ENCODE measurements at regions of chr20 and their contacts with region 1.

Region 1: DNA sequence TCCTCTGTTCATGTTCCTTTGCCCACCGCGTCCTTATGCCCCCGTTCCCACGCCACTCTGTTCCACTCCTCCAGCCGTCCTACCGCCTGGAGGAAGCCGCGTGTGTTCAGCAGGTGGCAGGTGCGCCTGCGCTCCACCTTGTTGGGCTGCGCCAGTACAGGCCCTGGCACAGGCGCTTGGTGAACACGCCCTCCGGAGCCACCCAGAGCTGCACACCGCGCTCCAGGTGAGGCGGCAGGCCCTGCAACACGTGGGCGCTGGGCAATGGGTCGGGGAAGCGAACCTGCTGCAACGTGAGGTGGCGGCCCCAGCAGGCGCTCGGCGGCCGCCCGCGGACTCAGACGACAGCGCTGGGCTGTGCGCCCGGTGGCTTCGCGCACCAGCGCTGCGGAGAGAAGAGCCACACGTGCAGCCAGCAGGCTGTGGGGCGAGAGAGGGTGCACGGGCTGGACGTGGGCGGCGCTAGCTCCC is 4.1 kb upstream of the FOXS1 start:
- DNase-seq: peak; percentile 75
- H3K4me3 Mint-ChIP-seq: peak overlapping the region; percentile 31
- H3K27ac Mint-ChIP-seq: no peak overlapping the region
- H3K4me1 Mint-ChIP-seq: peaks cover 9% of the 10 kb centered on the region
- H3K27me3 Mint-ChIP-seq: peaks cover 46% of the 10 kb centered on the region
- CTCF ChIP-seq: no peak

Region 2: GRCh38 chr20:31822421-31823330 is 26.8 kb before region 1 on chr20:
- CTCF ChIA-PET with region 1: interaction called, 27 read pairs
- intact Hi-C with region 1: loop called (anchors 1 kb)
- DNase-seq: peak; percentile 88
- H3K4me3 Mint-ChIP-seq: peak overlapping the region; percentile 35
- H3K27ac Mint-ChIP-seq: no peak overlapping the region
- H3K4me1 Mint-ChIP-seq: no peaks in the 10 kb centered on the region
- H3K27me3 Mint-ChIP-seq: no peaks in the 10 kb centered on the region
- CTCF ChIP-seq: peak; percentile 100

Region 3: DNA sequence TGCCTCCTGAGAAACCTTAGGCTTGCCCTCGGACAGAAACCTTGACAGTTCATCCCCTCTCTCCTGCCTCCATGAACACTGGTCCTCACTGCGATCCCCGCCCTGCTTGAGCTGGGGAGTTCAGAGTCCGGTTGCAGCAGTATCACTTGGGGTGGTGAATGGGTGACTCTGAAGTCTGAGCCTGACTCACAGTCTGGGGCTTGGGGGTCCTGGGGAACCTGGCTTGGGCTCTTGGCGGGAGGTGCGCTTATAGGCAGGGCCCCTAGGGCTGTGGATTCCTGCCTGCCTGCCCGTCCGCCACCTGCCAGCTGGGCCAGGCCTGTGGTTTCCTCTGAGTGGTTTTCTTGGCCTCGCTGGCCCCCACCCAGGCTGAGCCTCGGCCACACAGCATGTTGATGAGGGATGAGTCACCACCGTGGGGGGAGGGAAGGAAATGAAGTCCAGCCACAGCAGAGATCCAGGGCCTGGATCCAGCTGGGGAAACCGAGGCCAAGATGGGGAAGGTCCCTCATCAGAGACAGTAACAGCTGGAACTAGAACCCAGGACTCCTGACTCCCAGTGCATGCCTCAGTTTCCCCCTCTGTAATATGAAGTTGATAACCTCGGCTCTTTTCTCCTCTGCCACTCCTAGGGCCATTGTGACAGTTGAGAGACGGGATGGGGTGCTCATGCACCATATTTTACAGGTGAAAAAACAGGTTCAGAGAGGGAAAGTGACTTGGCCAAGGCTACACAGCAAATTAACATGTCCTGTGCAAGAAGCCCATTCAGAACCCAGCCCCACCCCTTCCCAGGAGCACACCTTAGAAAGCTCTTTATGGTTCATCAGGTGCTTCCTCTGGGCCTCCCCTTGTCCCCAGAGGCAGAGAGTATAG is 13.3 kb before region 1 on chr20:
- CTCF ChIA-PET with region 1: interaction called, 10 read pairs
- intact Hi-C with region 1: no loop called
- DNase-seq: peak; percentile 97
- H3K4me3 Mint-ChIP-seq: peak overlapping the region; percentile 6
- H3K27ac Mint-ChIP-seq: no peak overlapping the region
- H3K4me1 Mint-ChIP-seq: peaks cover 17% of the 10 kb centered on the region
- H3K27me3 Mint-ChIP-seq: no peaks in the 10 kb centered on the region
- CTCF ChIP-seq: no peak

Region 4: DNA sequence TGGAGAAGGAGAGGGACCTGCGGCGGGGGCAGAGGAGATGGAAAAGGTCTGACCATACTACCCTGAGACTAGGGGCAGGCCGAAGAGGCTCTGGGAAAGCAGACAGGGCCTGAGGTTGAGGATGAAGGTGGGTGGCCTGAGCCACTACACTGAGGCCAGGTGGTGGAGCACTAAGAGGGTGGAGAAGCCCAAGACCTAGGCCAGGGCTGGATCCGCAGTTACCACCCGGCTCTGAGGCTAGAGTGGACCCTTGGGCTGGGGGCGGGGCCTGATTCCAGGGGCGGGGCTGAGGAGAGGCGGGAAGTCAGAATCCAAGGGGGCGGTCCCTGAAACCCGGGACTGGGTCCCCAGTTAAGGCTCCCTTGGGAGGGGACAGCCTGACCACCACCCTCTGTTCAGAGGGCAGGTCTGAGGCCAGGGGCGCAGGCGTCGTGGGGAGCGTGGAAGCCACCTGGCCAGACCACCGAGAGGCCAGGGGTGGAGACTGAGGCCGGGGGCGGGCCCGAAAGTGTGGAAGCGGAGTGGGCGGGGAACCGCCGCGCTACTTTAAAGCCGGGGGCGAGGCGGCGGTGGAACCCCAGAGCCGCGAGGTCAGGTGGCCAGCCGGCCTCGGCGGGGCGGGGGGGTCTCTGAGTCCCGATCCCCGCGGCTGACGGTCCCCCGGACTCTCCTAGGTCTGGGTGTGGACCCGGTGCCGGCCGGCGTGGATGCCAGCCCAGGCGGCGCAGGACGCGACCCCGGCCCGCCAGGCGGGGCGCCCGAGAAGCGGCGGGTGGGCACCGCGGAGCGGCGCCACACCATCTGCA is 169.0 kb after region 1 on chr20:
- CTCF ChIA-PET with region 1: interaction called, 12 read pairs
- intact Hi-C with region 1: no loop called
- DNase-seq: peak; percentile 95
- H3K4me3 Mint-ChIP-seq: peak overlapping the region; percentile 88
- H3K27ac Mint-ChIP-seq: peak overlapping the region; percentile 29
- H3K4me1 Mint-ChIP-seq: no peaks in the 10 kb centered on the region
- H3K27me3 Mint-ChIP-seq: peaks cover 95% of the 10 kb centered on the region
- CTCF ChIP-seq: no peak

Region 5: DNA sequence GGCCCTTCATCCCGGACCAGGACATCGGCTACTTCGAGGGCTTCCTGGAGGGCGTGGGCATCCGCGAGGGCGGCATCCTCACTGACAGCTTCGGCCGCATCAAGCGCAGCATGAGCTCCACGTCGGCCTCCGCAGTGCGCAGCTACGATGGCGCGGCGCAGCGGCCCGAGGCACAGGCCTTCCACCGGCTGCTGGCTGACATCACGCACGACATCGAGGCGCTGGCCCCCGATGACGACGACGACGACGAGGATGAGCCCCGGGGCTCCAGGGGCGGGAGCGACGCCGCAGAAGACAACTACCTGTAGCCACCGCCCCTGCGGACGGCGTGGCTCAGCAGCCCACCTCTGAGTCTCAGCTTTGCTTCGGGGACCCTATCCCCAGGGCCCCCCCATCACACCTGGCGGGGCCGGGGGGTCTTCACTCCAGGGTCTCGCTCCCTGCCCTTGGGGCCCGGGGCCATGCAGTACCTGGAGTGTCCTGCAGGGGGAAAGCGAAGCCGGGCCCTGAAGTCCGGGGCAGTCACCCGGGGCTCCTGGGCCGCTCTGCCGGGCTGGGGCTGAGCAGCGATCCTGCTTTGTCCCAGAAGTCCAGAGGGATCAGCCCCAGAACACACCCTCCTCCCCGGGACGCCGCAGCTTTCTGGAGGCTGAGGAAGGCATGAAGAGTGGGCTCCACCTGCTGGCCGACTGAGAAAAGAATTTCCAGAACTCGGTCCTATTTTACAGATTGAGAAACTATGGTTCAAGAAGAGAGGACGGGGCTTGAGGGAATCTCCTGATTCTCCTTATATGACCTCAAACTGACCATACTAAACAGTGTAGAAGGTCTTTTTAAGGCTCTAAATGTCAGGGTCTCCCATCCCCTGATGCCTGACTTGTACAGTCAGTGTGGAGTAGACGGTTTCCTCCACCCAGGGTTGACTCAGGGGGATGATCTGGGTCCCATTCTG is 181.8 kb after region 1 on chr20:
- CTCF ChIA-PET with region 1: interaction called, 21 read pairs
- intact Hi-C with region 1: loop called (anchors 1 kb)
- DNase-seq: peak; percentile 90
- H3K4me3 Mint-ChIP-seq: no peak overlapping the region
- H3K27ac Mint-ChIP-seq: no peak overlapping the region
- H3K4me1 Mint-ChIP-seq: peaks cover 13% of the 10 kb centered on the region
- H3K27me3 Mint-ChIP-seq: peaks cover 79% of the 10 kb centered on the region
- CTCF ChIP-seq: peak; percentile 100

Region 6: GRCh38 chr20:32091888-32092346 is 242.4 kb after region 1 on chr20:
- CTCF ChIA-PET with region 1: interaction called, 5 read pairs
- intact Hi-C with region 1: loop called (anchors 5 kb)
- DNase-seq: peak; percentile 91
- H3K4me3 Mint-ChIP-seq: no peak overlapping the region
- H3K27ac Mint-ChIP-seq: no peak overlapping the region
- H3K4me1 Mint-ChIP-seq: no peaks in the 10 kb centered on the region
- H3K27me3 Mint-ChIP-seq: peaks cover 40% of the 10 kb centered on the region
- CTCF ChIP-seq: peak; percentile 98